HCT116 (cell line): ENCODE measurements at regions of chr5 and their contacts with region 1.

Region 1: GRCh38 chr5:150350524-150351344 is 6.8 kb upstream of the TCOF1 start:
- DNase-seq: peak; percentile 76
- ATAC-seq: peak; percentile 97
- H3K4me3 ChIP-seq: no peak overlapping the region
- H3K27ac ChIP-seq: no peak overlapping the region
- H3K4me1 ChIP-seq: peaks cover 3 to 11% of the 10 kb centered on the region in 2 experiments; a peak in 2 of 4 replicates
- H3K27me3 ChIP-seq: no peaks in the 10 kb centered on the region
- CTCF ChIP-seq: peak; percentile 59 to 97 (median 75)
- POLR2A ChIP-seq: no peak
- RAD21 ChIP-seq: peak; percentile 98

Region 2: DNA sequence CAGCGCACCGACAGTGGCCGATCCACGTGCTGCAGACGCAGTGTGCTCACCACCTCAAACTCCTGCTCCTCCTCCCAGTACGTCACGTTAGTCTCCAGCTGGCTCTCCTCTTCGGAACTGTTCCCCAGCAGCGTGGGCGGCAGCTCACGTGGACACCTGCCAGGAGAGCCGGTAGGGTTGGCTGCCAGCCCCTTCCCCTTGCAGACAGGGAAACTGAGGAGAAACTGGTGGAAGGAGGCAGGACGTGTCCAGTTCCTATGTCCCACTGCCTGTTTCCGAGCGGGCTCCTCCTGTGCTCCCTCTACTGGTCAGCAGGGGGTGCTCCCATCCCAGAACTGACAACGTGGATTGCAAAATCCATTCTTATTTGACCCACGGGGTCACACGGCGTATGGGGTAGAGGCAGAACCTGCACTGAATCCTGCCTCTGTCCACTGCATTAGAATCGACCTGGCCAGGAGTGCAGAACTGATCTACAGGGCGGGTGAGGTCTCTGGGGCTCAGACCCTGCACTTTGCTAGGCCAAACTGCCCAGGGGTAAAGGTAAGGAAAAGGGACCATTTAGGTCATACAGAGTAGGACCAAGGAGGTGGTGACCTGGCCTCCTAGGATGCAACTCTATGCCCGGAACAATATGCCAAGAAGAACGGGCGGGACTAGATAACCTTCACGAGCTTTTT is 220.8 kb before region 1 on chr5:
- CTCF ChIA-PET with region 1: no interaction called
- POLR2A ChIA-PET with region 1: no interaction called
- RAD21 ChIA-PET with region 1: no interaction called
- intact Hi-C with region 1: loop called (anchors 1 kb)
- DNase-seq: peak; percentile 43
- ATAC-seq: peak; percentile 96
- H3K4me3 ChIP-seq: peak overlapping the region in 1 of 2 experiments; percentile 25; a peak in 1 of 4 replicates
- H3K27ac ChIP-seq: no peak overlapping the region
- H3K4me1 ChIP-seq: peaks cover 0 to 9% of the 10 kb centered on the region in 2 experiments; a peak in 1 of 4 replicates
- H3K27me3 ChIP-seq: no peaks in the 10 kb centered on the region
- CTCF ChIP-seq: peak; percentile 91 to 94 (median 94)
- POLR2A ChIP-seq: no peak
- RAD21 ChIP-seq: peak; percentile 97

Region 3: DNA sequence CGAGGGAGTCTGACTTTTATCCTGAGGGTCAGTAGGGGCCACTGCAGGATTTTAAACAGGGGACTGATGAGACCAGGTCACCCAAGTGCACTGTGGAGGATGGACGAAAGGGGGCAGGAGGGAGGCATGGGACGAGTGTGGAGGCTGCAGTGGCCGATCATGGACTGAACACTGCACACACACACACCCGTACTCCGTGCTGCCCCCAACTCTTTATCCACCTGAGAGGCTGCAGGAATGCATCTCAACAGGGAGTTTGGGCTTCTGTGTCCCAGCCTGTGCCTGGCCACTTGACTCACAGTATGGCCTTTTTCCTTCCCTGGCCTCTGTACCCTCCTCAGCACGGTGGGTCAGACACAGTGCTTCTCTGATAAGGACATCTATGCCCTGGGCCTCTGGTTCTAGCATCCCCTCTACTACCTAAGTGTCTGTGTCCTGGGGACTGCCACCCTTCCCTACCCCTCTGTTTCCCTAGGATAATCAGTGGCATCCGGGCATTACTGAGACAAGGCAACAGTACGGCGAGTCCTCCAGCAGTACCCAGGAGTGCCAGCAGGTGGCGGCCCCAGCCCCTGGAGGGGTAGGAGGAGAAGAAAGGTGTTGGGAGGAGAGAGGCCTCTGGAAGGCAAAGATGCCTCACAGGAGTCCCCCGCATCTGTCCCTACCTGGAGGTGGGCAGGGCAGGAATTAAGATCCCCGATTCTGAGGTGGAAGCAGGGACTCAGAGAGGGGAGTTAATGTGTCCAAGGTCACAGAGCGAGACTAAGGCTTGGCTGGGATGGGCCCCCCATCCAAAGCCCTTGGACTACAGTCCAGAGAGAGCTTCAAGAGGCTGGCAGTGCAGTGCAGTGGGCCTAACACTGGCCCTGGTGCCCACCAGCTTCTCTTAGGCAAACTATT is 189.2 kb before region 1 on chr5:
- CTCF ChIA-PET with region 1: no interaction called
- POLR2A ChIA-PET with region 1: no interaction called
- RAD21 ChIA-PET with region 1: no interaction called
- intact Hi-C with region 1: loop called (anchors 1 kb)
- DNase-seq: peak; percentile 63
- ATAC-seq: peak; percentile 93
- H3K4me3 ChIP-seq: peak overlapping the region; percentile 29 to 52
- H3K27ac ChIP-seq: peak overlapping the region; percentile 20; the same call in 1 of the 2 replicates
- H3K4me1 ChIP-seq: peaks cover 3 to 19% of the 10 kb centered on the region in 2 experiments; a peak in 3 of 4 replicates
- H3K27me3 ChIP-seq: no peaks in the 10 kb centered on the region
- CTCF ChIP-seq: peak in 2 of 3 experiments; percentile 78 to 96; a peak in 4 of 6 replicates
- POLR2A ChIP-seq: no peak
- RAD21 ChIP-seq: no peak

Region 4: DNA sequence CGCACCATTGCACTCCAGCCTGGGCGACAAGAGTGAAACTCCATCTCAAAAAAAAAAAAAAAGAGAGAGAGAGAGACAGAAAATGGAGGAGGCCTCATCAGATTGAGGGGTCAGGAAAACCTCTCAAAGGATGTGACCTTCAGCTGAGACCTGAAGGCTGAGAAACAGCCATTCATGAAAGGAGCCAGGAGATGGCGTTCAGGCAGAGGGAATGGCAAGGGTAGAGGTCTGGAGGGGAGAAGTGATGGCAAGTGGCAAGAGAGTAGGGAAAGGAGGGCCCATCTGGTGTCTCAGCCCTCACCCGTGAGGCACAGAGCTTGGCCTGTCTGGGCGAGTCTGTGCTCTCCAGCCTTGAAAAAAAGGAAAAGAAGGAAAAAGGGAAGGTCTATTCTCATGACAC is 78.2 kb before region 1 on chr5:
- CTCF ChIA-PET with region 1: interaction called, 20 read pairs
- POLR2A ChIA-PET with region 1: interaction called, 3 read pairs
- RAD21 ChIA-PET with region 1: no interaction called
- intact Hi-C with region 1: loop called (anchors 1 kb)
- DNase-seq: no peak
- ATAC-seq: peak; percentile 84
- H3K4me3 ChIP-seq: no peak overlapping the region
- H3K27ac ChIP-seq: no peak overlapping the region
- H3K4me1 ChIP-seq: no peaks in the 10 kb centered on the region
- H3K27me3 ChIP-seq: no peaks in the 10 kb centered on the region
- CTCF ChIP-seq: peak; percentile 43 to 72 (median 45); a peak in 4 of 6 replicates
- POLR2A ChIP-seq: no peak
- RAD21 ChIP-seq: peak; percentile 86

Region 5: DNA sequence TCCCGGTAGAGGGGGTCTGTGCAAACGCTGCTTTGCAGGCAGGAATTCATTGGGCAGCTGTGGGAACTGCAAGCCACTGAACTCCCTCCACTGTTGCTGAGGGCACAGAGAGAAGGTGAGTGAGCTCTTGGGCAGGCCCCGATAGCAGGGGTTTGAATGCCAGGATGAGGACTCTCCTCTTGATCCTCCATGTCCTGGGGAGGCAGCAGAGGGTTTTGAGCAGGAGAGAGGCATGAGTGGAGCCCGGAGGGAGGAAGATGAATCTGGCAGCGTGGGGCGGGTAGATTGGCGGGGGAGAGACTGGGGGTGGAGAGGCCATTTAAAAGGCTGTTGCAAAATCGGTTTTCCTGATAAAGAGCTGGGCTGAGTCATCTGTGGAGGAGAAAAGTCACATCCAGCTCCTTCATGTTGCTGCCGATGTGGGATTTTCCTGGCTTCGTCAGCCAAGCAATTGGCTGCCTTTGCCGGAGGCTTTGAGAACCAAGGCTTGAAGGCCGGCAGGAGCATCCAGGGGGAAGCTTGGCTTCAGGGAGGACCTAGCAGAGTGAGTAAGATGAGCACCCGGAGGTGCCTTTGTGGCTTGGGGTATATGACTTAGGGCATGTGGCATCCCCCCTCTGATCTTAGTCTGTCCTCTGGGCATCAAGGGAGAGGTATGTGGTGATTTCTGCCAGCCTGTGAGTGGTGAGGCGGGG is 289.7 kb after region 1 on chr5 and contains the start of gene SYNPO:
- CTCF ChIA-PET with region 1: no interaction called
- POLR2A ChIA-PET with region 1: no interaction called
- RAD21 ChIA-PET with region 1: no interaction called
- intact Hi-C with region 1: no loop called
- DNase-seq: no peak
- ATAC-seq: no peak
- H3K4me3 ChIP-seq: no peak within 1 kb of the TSS
- H3K27ac ChIP-seq: no peak within 1 kb of the TSS
- H3K4me1 ChIP-seq: peaks cover 77 to 97% of the 10 kb centered on the region in 2 experiments
- H3K27me3 ChIP-seq: no peaks in the 10 kb centered on the region
- CTCF ChIP-seq: no peak
- POLR2A ChIP-seq: no peak
- RAD21 ChIP-seq: no peak
- total RNA-seq, gene SYNPO: 8.2 TPM